Motor neuron (in vitro differentiated cells): ENCODE measurements at regions of chr2 and their contacts with region 1.

Region 1: GRCh38 chr2:113138428-113139322 is 11.3 kb downstream of the IL1RN start:
- ATAC-seq: peak in 7 of 8 experiments; percentile 30 to 86 (median 53)
- H3K4me3 ChIP-seq: no peak overlapping the region
- H3K27ac ChIP-seq: no peak overlapping the region
- H3K4me1 ChIP-seq: no peaks in the 10 kb centered on the region

Region 2: GRCh38 chr2:113390124-113390849 is 251.6 kb after region 1 on chr2:
- in situ Hi-C with region 1: loop called in 1 of 9 experiments (anchors 25 kb)
- ATAC-seq: peak; percentile 64 to 97 (median 69)
- H3K4me3 ChIP-seq: no peak overlapping the region
- H3K27ac ChIP-seq: no peak overlapping the region
- H3K4me1 ChIP-seq: no peaks in the 10 kb centered on the region